Activated CD4-positive, alpha-beta memory T cell treated with anti-CD3 and anti-CD28 coated beads, Interleukin-2, amount 10 ng/mL, durations not matched to agents 7 days and 5 days (primary cell): ENCODE measurements at regions of chr11 and their contacts with region 1.

Region 1: GRCh38 chr11:61083601-61084147 is 18.6 kb upstream of the CD5 start:
- DNase-seq: peak; percentile 81
- H3K4me3 Mint-ChIP-seq: peak overlapping the region; percentile 82
- H3K27ac Mint-ChIP-seq: peak overlapping the region; percentile 96
- H3K4me1 Mint-ChIP-seq: peaks cover 61% of the 10 kb centered on the region
- H3K27me3 Mint-ChIP-seq: no peaks in the 10 kb centered on the region

Region 2: GRCh38 chr11:60985991-60986915 is 97.4 kb before region 1 on chr11:
- CTCF ChIA-PET with region 1: interaction called, 5 read pairs
- POLR2A ChIA-PET with region 1: interaction called, 101 read pairs
- DNase-seq: peak; percentile 90
- H3K4me3 Mint-ChIP-seq: peak overlapping the region; percentile 80
- H3K27ac Mint-ChIP-seq: peak overlapping the region; percentile 99
- H3K4me1 Mint-ChIP-seq: peaks cover 91% of the 10 kb centered on the region
- H3K27me3 Mint-ChIP-seq: no peaks in the 10 kb centered on the region

Region 3: GRCh38 chr11:61028272-61028761 is 55.4 kb before region 1 on chr11:
- CTCF ChIA-PET with region 1: interaction called, 8 read pairs
- POLR2A ChIA-PET with region 1: interaction called, 58 read pairs
- DNase-seq: peak; percentile 62
- H3K4me3 Mint-ChIP-seq: peak overlapping the region; percentile 72
- H3K27ac Mint-ChIP-seq: peak overlapping the region; percentile 86
- H3K4me1 Mint-ChIP-seq: peaks cover 88% of the 10 kb centered on the region
- H3K27me3 Mint-ChIP-seq: no peaks in the 10 kb centered on the region

Region 4: GRCh38 chr11:61071208-61071681 is 12.4 kb before region 1 on chr11:
- CTCF ChIA-PET with region 1: interaction called, 7 read pairs
- POLR2A ChIA-PET with region 1: interaction called, 228 read pairs
- DNase-seq: peak; percentile 83
- H3K4me3 Mint-ChIP-seq: peak overlapping the region; percentile 40
- H3K27ac Mint-ChIP-seq: peak overlapping the region; percentile 93
- H3K4me1 Mint-ChIP-seq: peaks cover 91% of the 10 kb centered on the region
- H3K27me3 Mint-ChIP-seq: no peaks in the 10 kb centered on the region

Region 5: GRCh38 chr11:61120706-61121191 is 37.1 kb after region 1 on chr11:
- CTCF ChIA-PET with region 1: no interaction called
- POLR2A ChIA-PET with region 1: interaction called, 134 read pairs
- DNase-seq: no peak
- H3K4me3 Mint-ChIP-seq: no peak overlapping the region
- H3K27ac Mint-ChIP-seq: no peak overlapping the region
- H3K4me1 Mint-ChIP-seq: peaks cover 57% of the 10 kb centered on the region
- H3K27me3 Mint-ChIP-seq: no peaks in the 10 kb centered on the region